ENCODE measurements at regions of chr12 and their contacts with region 1.

Region 1: DNA sequence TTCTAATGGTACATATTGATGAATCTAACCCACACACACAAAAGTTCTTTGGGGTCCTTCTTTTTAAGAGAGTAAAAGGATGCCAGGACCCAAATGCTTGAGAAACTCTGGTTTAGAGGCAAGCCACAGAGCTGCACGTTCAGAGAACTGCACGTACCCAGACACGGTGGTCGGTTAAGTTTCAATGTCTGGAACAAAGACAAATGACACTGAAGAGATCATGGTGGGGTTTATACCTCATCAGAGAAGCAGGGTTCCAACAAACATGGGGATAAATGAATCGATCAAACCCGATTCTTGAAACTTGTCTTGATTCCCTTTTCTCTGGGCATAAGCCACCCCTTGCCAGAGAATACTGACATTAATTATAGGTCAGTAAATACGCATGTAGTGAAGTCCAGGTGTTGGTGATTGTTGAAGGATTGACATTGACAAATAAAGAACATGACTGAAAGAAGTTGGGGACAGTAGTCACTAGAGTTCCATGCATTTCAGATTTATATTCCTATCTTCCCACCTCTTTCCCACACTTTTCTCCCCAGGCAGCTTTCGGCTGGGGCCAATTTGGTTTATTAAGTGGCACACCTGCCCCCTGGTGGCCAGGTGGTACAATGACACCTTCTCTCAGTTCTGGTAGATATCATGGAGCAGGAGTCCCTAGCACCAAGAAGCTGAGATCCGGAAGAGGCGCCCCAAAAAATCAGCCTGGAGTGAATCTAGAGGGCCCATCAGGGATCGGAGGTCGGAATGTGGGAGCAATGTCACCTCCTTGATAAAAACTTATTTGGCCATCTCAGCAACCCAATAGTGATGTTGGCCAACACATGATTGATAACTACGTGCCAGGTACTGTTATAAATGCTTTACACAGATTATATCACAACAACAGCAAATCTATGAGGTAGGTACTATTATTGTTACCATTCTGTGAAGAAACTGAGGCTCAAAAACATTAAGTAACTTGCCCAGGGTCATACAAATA is 17.8 kb upstream of the HDAC7 start:
- DNase-seq: no peak
- H3K4me3 ChIP-seq: no peak overlapping the region
- CTCF ChIP-seq: peak; percentile 80

Region 2: DNA sequence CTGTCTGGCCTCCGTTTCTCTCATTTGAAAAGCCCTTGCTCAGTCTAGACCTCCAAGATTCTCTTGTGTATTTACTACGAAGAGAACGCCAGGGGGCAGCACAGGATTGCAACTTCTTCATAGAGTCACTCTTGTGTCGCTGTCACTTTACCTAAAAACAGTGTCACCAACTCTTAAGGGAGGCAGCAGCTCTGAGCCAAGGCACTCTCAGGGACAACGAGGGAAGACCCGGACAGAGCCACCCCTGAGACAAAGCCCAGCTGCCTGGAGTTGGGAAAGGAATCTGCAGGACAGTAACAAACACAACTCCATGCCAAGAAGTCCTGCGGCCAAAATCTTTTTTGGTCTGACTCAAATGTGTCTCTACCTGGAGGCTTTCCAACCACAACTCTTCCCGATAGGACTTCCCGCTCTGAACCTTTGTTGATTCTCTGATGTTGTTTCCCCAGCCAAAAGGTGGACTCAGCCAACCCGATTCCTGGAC is 122.0 kb before region 1 on chr12:
- CTCF ChIA-PET with region 1: interaction called, 1,054 read pairs
- POLR2A ChIA-PET with region 1: no interaction called
- DNase-seq: peak; percentile 24
- H3K4me3 ChIP-seq: no peak overlapping the region
- CTCF ChIP-seq: peak; percentile 61

Region 3: DNA sequence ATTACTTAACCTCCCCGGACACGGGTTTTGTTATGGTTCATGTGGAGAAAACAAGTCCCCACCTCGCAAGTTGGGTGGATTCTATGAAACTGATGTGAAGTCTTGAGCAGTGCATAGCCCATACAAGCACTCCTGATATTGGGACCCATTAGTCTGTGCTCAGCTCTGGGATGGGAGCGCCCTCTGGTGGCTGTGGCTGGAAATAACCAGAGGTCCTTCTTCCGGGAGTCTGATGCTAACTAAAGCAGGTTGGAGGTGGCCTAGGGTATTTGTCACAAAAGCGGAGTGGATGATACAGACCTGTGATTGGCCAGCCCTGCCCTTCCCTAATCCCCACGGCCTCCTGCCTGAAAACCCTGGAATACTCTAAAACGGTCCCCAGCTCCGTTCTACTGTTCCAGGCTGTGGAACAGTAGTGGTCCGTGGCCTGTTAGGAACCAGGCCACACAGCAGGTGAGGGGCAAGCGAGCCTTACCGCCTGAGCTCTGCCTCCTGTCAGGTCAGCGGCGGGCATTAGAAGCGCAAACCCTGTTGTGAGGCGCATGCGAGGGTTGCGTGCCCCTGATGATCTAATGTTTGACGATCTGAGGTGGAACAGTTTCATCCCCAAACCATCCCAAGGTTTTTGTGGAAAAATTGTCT is 58.1 kb before region 1 on chr12:
- CTCF ChIA-PET with region 1: interaction called, 751 read pairs
- POLR2A ChIA-PET with region 1: interaction called, 6 read pairs
- DNase-seq: peak; percentile 34
- H3K4me3 ChIP-seq: no peak overlapping the region
- CTCF ChIP-seq: peak; percentile 86

Region 4: DNA sequence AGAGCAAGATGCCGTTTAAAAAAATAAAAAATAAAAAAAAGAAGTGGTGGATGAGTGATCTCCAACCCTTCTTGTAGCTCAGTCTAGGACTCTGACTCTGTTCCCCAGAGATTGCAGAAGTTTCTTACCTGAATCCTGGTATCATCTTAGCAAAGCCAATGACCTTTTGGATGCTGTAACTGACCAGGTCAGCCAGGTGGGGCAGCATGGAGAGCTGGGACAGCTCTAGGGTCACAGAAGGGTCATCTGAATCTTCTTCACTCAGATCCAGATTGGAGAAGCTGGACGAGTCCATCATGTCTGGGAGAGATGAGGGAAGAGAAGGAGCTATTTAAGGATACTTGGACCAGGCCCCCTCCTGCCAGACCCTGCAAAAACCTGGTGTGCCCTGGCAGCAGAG is 18.0 kb after region 1 on chr12:
- CTCF ChIA-PET with region 1: interaction called, 108 read pairs
- POLR2A ChIA-PET with region 1: interaction called, 3 read pairs
- DNase-seq: no peak
- H3K4me3 ChIP-seq: no peak overlapping the region
- CTCF ChIP-seq: no peak

Region 5: DNA sequence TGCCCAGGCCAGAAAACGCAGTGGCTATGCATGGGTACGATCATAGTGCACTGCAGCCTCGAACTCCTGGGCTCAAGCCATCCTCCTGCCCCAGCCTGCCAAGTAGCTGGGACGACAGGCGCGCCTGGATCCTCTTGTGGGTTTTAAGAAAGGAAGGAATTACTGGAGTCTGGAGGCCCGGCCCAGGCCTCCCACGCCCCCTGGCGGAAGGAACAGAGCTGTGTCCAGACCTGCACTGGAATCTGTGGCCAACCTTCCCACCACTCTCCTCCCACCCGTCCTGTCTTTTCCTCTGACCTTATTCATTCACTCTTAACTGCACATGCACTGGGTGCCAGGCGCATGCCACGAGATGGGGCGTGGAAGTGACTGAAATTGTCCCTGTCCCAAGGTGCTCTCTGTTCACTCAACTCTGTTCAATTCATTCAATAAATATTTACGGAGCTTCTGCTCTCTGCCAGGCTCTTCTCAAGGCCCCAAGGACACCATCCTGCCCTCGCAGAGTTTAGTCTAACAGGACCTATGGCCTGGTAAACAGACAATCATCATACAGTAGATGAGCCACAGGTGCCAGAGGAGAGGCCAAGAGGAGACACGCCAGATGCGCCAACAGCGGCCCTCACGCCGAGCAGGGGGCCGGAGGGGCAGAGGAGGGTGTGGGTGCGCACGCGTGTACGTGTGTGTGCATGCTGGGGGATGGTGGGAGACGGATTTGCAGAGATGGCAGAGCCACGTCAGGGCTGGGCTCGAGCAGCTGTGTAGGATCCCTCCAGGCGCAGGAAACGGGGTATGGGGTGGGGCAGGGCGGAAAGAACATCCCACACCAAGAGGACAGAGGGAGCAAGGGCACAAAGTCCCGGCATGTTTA is 112.2 kb after region 1 on chr12:
- CTCF ChIA-PET with region 1: interaction called, 131 read pairs
- POLR2A ChIA-PET with region 1: no interaction called
- DNase-seq: peak; percentile 23
- H3K4me3 ChIP-seq: no peak overlapping the region
- CTCF ChIP-seq: peak; percentile 97

Region 6: DNA sequence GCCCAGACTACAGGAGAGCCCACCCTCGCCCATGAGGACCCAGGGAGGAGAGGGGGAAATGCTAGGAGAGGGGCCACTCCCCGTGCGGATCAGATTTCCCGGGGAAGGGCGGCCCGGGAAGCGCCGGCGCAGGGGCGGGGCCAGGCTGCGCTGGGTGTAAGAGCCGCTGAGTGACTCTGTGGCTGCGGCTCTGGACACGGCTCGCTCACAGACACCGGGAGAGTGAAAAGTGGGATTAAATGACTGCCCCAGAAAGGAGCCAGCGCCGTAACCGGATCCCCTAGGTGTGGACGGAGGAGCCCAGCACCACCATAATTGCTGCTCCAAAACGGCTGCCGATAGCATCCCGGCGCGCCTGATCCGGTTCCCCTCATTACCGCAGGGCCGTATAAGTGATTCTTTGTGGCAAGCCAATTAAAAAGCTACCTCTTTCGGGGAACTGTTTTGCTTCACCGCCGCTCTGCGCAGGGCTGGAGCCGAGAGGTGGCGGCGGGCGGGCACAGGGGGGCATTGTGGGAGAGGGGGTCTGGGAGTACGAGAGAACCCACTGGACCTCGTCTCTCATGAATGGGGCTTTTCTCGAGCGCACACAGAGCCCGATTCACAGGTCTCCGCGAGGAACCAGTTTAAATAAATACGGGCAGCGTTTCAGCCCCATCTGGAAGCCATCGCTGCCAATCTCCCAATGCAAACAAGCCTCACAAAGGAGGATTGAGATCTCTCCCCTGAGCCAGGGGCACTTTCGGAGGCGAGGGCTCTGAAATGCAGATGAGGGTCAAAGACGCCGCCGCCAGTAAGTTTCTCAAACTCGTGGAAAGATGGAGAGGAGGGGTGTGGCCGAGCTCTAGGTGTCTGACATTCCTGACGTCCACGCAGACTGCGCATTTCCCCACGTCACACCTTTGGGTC is 164.3 kb after region 1 on chr12:
- CTCF ChIA-PET with region 1: no interaction called
- POLR2A ChIA-PET with region 1: no interaction called
- DNase-seq: no peak
- H3K4me3 ChIP-seq: peak overlapping the region; percentile 56
- CTCF ChIP-seq: no peak

Measured in AG04449 (cell line).